Activated naive CD4-positive, alpha-beta T cell treated with anti-CD3 and anti-CD28 coated beads for 36 hours (primary cell): ENCODE measurements at regions of chr3 and their contacts with region 1.

Region 1: GRCh38 chr3:133927540-133928066 is 31.9 kb upstream of the RAB6B start:
- DNase-seq: peak; percentile 60
- H3K4me3 Mint-ChIP-seq: no peak overlapping the region
- H3K27ac Mint-ChIP-seq: no peak overlapping the region
- H3K4me1 Mint-ChIP-seq: peaks cover 6% of the 10 kb centered on the region
- H3K27me3 Mint-ChIP-seq: peaks cover 2% of the 10 kb centered on the region

Region 2: GRCh38 chr3:133448478-133449122 is 479.0 kb before region 1 on chr3:
- CTCF ChIA-PET with region 1: no interaction called
- intact Hi-C with region 1: loop called (anchors 5 kb)
- DNase-seq: peak; percentile 76
- H3K4me3 Mint-ChIP-seq: no peak overlapping the region
- H3K27ac Mint-ChIP-seq: peak overlapping the region; percentile 42
- H3K4me1 Mint-ChIP-seq: peaks cover 36% of the 10 kb centered on the region
- H3K27me3 Mint-ChIP-seq: no peaks in the 10 kb centered on the region

Region 3: DNA sequence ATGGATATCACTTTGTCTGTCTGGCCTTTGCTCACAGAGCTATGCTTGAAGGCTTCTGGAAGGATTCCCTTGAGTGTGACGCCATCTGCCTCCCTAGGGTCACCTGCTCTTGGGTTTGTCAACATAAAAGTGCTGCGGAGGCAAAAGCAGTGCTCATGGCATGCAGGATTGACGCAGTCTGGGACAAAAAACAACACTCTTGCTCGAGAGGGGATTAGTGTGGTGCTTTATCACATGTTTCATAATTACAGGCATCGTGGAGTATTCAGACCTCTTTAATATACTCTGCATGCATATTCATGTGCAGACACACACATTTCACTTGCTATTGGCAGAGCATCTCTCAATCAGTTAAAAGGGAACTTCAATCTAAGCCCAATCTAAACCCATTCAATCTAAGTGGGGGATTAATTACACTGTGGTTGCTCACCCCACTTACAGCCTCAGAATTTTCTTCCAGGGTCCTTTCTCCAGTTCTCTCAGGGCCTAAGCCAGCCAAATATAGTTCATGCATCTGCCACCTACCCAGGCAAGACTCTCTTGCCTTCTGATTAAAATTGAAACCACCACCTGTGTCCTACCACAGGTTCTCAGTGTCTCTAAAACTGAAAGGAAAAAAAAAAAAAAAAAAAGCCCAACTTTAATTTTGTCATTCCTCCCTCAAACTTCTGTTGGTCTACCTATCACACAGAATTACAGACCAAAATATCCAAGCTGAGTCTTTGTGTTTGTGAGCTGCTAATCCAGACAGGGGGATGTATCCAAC is 452.2 kb before region 1 on chr3:
- CTCF ChIA-PET with region 1: no interaction called
- intact Hi-C with region 1: no loop called
- DNase-seq: peak; percentile 46
- H3K4me3 Mint-ChIP-seq: no peak overlapping the region
- H3K27ac Mint-ChIP-seq: peak overlapping the region; percentile 59
- H3K4me1 Mint-ChIP-seq: peaks cover 48% of the 10 kb centered on the region
- H3K27me3 Mint-ChIP-seq: no peaks in the 10 kb centered on the region

Region 4: DNA sequence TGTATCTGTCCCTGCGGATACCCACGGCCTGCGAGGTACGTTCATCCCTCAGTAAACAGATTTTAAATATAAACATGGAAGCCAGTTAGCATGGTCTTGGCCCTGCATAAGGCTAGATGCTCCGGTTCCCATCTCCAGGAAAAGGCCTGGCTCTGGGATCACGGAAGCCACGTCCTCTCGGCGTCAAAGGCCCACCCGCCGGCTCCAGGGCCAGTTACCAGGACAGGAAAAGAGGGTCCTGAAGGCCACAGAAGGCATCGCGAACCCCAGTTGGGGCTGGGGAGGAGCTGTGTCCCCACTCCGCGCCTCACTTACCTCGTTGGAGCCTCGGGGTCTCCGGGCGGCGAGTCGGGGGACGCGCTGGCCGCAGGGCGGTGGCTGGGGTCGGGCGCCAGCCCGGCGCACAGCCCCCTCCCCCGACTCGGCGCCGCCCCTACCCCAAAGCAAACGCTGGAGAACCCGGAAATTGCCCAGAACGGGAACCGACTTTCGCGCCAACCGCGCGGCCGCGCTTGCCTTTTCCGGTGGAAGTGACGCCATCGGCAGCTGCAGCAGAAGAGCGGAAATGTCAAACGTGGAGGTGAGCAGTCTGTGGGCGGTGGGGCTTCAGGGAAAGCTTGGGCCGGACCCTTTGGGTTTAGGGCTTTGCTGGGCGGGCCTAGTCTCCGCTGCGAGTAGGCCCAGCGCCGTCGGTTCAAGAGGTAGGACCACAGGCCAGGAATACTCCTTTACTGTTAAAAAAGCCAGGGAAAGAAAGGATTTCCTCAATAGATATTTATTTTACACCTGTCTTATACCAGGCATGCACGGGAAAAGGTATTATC is 265.9 kb before region 1 on chr3 and contains the start of gene TOPBP1:
- CTCF ChIA-PET with region 1: no interaction called
- intact Hi-C with region 1: loop called (anchors 1 kb)
- DNase-seq: peak; percentile 94
- H3K4me3 Mint-ChIP-seq: peak within 1 kb of the TSS; percentile 98
- H3K27ac Mint-ChIP-seq: peak within 1 kb of the TSS; percentile 98
- H3K4me1 Mint-ChIP-seq: peaks cover 28% of the 10 kb centered on the region
- H3K27me3 Mint-ChIP-seq: no peaks in the 10 kb centered on the region
- total RNA-seq, gene TOPBP1: 65.4 to 65.8 TPM

Region 5: DNA sequence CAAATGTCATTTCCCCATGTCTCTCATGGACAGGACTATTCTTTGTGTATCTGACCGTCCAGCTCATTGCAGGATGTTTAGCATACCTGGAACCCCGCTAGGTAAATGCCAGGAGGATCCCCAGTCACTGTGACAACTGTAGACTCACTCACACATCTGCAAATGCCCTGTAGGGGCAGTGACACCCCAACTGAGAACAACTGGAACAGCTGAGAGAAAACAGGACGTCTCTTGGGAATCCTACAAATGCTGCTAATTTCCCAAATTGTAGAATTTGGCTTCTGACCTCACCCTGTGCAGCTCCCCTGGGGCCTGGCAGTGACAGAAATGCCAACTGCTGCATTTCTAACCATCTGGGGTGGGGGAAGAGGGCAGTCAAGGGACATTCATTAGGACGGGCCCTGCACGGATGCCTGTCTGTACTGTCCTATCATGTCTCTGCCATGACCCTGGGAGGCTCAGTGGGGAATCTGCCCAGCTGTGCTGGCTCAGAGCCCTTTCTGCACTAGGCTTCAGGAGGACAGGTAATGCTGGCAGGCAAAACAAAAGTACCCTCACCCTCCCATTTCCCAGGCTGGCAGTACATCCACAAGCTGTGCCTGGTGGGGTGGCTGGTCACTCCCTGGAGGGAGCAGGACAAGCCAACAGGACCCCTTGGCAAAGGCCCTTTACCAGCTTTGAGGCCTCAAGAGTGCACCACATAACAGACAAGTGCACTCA is 62.3 kb before region 1 on chr3:
- CTCF ChIA-PET with region 1: no interaction called
- intact Hi-C with region 1: loop called (anchors 5 kb)
- DNase-seq: no peak
- H3K4me3 Mint-ChIP-seq: no peak overlapping the region
- H3K27ac Mint-ChIP-seq: no peak overlapping the region
- H3K4me1 Mint-ChIP-seq: no peaks in the 10 kb centered on the region
- H3K27me3 Mint-ChIP-seq: peaks cover 6% of the 10 kb centered on the region

Region 6: GRCh38 chr3:133955892-133956291 is 28.3 kb after region 1 on chr3:
- CTCF ChIA-PET with region 1: no interaction called
- intact Hi-C with region 1: no loop called
- DNase-seq: no peak
- H3K4me3 Mint-ChIP-seq: no peak overlapping the region
- H3K27ac Mint-ChIP-seq: no peak overlapping the region
- H3K4me1 Mint-ChIP-seq: no peaks in the 10 kb centered on the region
- H3K27me3 Mint-ChIP-seq: no peaks in the 10 kb centered on the region

Region 7: DNA sequence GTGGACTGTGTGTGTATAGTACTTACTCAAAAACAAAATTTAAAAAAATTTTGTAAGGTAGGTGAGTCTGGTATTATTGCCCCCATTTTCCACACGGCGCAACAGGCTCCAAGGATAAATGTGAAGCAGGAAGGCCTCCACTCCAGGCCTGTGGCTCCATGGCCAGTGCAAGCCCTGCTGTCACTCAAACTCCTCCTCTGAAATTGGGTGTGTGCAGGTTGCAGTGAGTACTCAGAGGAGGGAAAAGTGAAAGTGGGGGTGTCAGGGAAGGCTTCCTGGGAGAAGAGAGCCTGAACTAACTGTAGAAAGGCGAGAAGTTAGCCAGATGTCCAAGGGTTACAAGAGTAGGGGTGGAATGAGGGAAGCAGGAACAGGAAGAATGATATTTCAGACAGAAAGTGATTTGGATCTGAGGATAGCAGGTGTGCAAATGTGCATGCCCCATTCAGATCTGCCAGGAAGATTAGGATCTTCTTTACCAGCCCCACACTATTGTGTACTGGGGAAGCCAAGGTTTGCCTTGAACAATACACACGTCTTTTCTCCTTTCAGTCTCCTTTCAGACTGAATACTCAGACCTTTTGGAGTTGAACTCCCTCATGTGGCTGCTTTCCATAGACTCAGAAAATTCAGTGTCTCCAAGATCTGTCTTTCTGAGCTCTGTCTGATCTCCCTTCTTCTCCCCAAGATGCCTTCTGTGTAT is 371.7 kb after region 1 on chr3:
- CTCF ChIA-PET with region 1: no interaction called
- intact Hi-C with region 1: loop called (anchors 2 kb)
- DNase-seq: no peak
- H3K4me3 Mint-ChIP-seq: no peak overlapping the region
- H3K27ac Mint-ChIP-seq: no peak overlapping the region
- H3K4me1 Mint-ChIP-seq: no peaks in the 10 kb centered on the region
- H3K27me3 Mint-ChIP-seq: peaks cover 11% of the 10 kb centered on the region

Region 8: DNA sequence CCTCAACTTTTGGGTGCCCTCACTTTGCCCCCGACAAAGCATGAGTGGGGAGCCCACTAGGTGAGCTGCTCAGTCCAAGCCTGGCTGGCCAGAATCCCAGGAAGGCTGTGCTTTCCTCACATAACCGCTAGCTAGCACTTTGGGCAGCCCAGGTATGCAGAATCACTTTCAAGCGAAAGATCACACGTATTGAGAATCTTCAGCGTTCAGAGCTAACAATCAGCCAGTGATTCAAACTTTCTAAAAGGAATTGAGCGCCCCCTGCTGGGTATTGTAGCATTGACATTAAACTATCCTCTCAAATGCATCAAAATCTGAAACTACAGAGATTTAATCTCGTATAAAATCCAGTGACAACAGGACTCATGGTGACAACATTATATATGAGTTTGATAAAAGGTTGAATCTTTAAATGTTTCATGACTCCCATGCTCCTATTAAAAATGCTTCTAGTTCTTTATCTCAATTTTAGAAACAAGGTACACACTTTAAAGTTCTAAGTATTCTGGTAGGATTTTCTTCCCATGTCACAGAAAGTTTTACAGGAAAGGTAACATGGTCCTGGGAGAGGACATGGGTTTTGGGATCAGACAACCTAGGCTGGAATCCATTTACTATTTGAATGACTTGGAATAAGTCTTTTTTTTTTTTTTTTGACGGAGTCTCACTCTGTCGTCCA is 546.4 kb after region 1 on chr3:
- CTCF ChIA-PET with region 1: interaction called, 3 read pairs
- intact Hi-C with region 1: loop called (anchors 1 kb)
- DNase-seq: peak; percentile 91
- H3K4me3 Mint-ChIP-seq: no peak overlapping the region
- H3K27ac Mint-ChIP-seq: no peak overlapping the region
- H3K4me1 Mint-ChIP-seq: no peaks in the 10 kb centered on the region
- H3K27me3 Mint-ChIP-seq: no peaks in the 10 kb centered on the region